ENCODE measurements at regions of chr4 and their contacts with region 1.

Region 1: GRCh38 chr4:182955411-182955810 is 38.2 kb upstream of the DCTD start:
- DNase-seq: no peak
- H3K4me3 ChIP-seq: no peak overlapping the region
- H3K27ac ChIP-seq: no peak overlapping the region
- H3K4me1 ChIP-seq: no peaks in the 10 kb centered on the region
- H3K27me3 ChIP-seq: no peaks in the 10 kb centered on the region

Region 2: DNA sequence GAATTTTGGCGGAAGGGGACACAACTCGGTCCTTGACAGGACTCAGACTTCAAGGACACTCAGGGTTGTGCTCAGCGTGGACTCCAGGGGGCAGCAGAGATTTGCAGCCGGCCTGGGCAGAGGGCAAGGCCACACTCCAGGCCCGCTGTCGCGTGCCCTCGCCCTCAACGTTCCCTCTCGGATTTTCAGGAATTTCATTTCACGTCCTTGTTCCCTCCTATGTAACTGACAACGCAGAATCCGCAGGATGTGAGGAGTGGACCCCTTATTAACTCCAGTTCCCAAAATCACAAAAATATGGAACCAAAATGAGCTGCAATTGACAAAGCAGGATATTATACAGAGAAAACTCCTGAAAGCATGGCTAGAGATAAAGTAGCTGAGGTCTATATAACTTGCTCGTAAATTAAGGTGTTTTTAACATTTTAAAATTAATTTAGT is 17.2 kb before region 1 on chr4:
- CTCF ChIA-PET with region 1: interaction called, 16 read pairs
- POLR2A ChIA-PET with region 1: no interaction called
- DNase-seq: peak; percentile 65 to 75 (median 71)
- H3K4me3 ChIP-seq: no peak overlapping the region
- H3K27ac ChIP-seq: no peak overlapping the region
- H3K4me1 ChIP-seq: peaks cover 0 to 1% (median 0%) of the 10 kb centered on the region in 4 experiments
- H3K27me3 ChIP-seq: peaks cover 0 to 2% (median 0%) of the 10 kb centered on the region in 5 experiments

Region 3: DNA sequence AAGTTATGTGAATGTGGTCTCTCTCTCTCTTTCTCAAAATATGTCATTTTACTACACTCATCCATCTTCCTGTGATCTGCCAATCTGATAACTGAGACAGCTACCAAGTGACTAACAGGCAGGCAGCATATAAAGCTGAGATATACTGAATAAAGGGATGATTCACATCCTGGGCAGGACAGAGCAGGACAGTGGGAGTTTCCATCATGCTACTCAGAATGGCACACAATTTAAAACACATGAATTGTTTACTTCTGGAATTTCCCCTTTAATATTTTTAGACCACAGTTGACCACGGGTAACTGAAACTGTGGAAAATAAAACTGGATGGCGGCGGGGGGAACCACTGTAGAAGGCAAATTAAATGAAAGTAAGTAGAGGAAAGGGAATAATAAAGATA is 20.4 kb after region 1 on chr4:
- CTCF ChIA-PET with region 1: no interaction called
- POLR2A ChIA-PET with region 1: no interaction called
- DNase-seq: peak; percentile 53 to 90 (median 86)
- H3K4me3 ChIP-seq: peak overlapping the region in 2 of 7 experiments; percentile 33 to 34
- H3K27ac ChIP-seq: peak overlapping the region in 1 of 2 experiments; percentile 58
- H3K4me1 ChIP-seq: peaks cover 6 to 17% (median 12%) of the 10 kb centered on the region in 4 experiments
- H3K27me3 ChIP-seq: no peaks in the 10 kb centered on the region

Measured in common myeloid progenitor, CD34-positive (primary cell).